Ovary (tissue), 10 donors: ENCODE measurements at regions of chr5 and their contacts with region 1.

Region 1: GRCh38 chr5:108748401-108749127 is 867 bp downstream of the FER start:
- DNase-seq: peak; percentile 98 to 99 (median 99)
- H3K4me3 ChIP-seq: peak overlapping the region; percentile 83
- H3K27ac ChIP-seq: peak overlapping the region; percentile 95 to 97
- H3K4me1 ChIP-seq: no peaks in the 10 kb centered on the region
- H3K27me3 ChIP-seq: no peaks in the 10 kb centered on the region
- CTCF ChIP-seq: peak in 2 of 3 donors; percentile 14 to 26
- EP300 ChIP-seq: no peak
- POLR2A ChIP-seq: peak; percentile 99

Region 2: GRCh38 chr5:108381954-108382783 is 366.4 kb before region 1 on chr5 and contains the start of gene FBXL17:
- intact Hi-C with region 1: loop called in 1 of 4 experiments (anchors 5 kb)
- DNase-seq: peak; percentile 90 to 93 (median 92)
- H3K4me3 ChIP-seq: peak within 1 kb of the TSS; percentile 100
- H3K27ac ChIP-seq: peak within 1 kb of the TSS; percentile 82 to 99
- H3K4me1 ChIP-seq: peaks cover 3% of the 10 kb centered on the region
- H3K27me3 ChIP-seq: no peaks in the 10 kb centered on the region
- CTCF ChIP-seq: no peak
- EP300 ChIP-seq: no peak
- POLR2A ChIP-seq: peak; percentile 87
- total RNA-seq, gene FBXL17: 8.3 to 20.4 (median 17.4) TPM

Region 3: GRCh38 chr5:108727651-108728565 is 20.7 kb before region 1 on chr5:
- intact Hi-C with region 1: loop called in 2 of 4 experiments (anchors 1 to 2 kb)
- DNase-seq: peak; percentile 89 to 93 (median 91)
- H3K4me3 ChIP-seq: peak overlapping the region; percentile 68
- H3K27ac ChIP-seq: peak overlapping the region; percentile 81 to 86
- H3K4me1 ChIP-seq: peaks cover 3% of the 10 kb centered on the region
- H3K27me3 ChIP-seq: no peaks in the 10 kb centered on the region
- CTCF ChIP-seq: peak in 1 of 3 donors; percentile 25
- EP300 ChIP-seq: no peak
- POLR2A ChIP-seq: peak; percentile 79